ENCODE measurements at regions of chr5 and their contacts with region 1.

Region 1: DNA sequence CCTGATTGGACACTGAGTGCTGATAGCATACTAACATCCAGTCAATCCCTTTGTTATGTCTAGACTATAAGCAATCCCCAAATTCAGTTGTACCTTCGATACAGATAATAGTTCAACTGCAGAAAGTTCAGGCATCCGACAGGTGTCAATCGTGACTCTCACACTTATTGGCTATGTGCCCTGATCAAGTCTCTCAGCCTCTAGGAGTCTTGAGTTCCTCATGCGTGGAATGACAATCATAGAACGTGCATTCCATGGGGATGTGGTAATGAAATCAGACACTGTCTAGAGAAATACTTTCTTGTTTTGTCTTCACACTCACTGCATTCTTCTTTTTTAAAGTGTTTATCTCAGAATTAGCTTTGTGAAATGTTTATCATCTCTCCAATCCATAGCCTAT is 4.8 kb downstream of the ANKRD34B start:
- DNase-seq: no peak

Region 2: GRCh38 chr5:78964887-78965286 is 1600.4 kb before region 1 on chr5:
- intact Hi-C with region 1: no loop called
- DNase-seq: no peak

Region 3: GRCh38 chr5:79229357-79230174 is 1335.8 kb before region 1 on chr5:
- intact Hi-C with region 1: no loop called
- DNase-seq: no peak

Region 4: DNA sequence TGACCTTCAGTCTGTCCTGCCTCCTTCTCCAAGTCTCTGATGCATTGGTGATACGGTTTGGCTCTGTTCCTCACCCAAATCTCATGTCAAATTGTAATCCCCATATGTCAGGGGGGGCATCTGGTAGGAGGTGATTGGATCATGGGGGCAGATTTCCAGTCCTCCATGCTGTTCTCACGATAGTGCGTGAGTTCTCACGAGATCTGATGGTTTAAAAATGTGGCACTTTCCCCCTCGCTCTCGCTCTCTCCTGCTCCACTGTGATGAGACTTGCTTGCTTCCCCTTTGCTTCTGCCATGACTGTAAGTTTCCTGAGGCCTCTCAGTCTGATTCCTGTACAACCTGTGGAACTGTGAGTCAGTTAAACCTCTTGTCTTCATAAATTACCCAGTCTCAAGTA is 19.4 kb after region 1 on chr5:
- intact Hi-C with region 1: loop called in 1 of 2 experiments (anchors 1 kb)
- DNase-seq: no peak